Right cardiac atrium (tissue), 5 donors: ENCODE measurements at regions of chr5 and their contacts with region 1.

Region 1: GRCh38 chr5:138464008-138464387 is 1.3 kb upstream of the EGR1 start:
- DNase-seq: peak; percentile 97 to 99 (median 99)
- ATAC-seq: peak; percentile 81 to 88
- H3K4me3 ChIP-seq: peak overlapping the region; percentile 85
- H3K27ac ChIP-seq: peak overlapping the region; percentile 97
- H3K4me1 ChIP-seq: peaks cover 2% of the 10 kb centered on the region
- H3K27me3 ChIP-seq: no peaks in the 10 kb centered on the region

Region 2: GRCh38 chr5:138503487-138504270 is 39.7 kb after region 1 on chr5:
- intact Hi-C with region 1: loop called in 1 of 4 experiments (anchors 5 kb)
- DNase-seq: no peak
- ATAC-seq: peak; percentile 71
- H3K4me3 ChIP-seq: no peak overlapping the region
- H3K27ac ChIP-seq: no peak overlapping the region
- H3K4me1 ChIP-seq: no peaks in the 10 kb centered on the region
- H3K27me3 ChIP-seq: no peaks in the 10 kb centered on the region

Region 3: GRCh38 chr5:138542956-138543729 is 79.1 kb after region 1 on chr5 and contains the start of gene ETF1:
- intact Hi-C with region 1: loop called in 1 of 4 experiments (anchors 10 kb)
- DNase-seq: peak; percentile 100
- ATAC-seq: peak; percentile 95 to 97
- H3K4me3 ChIP-seq: peak within 1 kb of the TSS; percentile 97
- H3K27ac ChIP-seq: peak within 1 kb of the TSS; percentile 99
- H3K4me1 ChIP-seq: peaks cover 3% of the 10 kb centered on the region
- H3K27me3 ChIP-seq: no peaks in the 10 kb centered on the region
- total RNA-seq, gene ETF1: 77.6 to 114 (median 78.6) TPM